Right lobe of liver (tissue), 6 donors: ENCODE measurements at regions of chr9 and their contacts with region 1.

Region 1: GRCh38 chr9:132288361-132288760 is 66.4 kb downstream of the SETX start:
- DNase-seq: no peak
- ATAC-seq: peak in 1 of 4 donors; percentile 58
- H3K4me3 ChIP-seq: no peak overlapping the region
- H3K27ac ChIP-seq: no peak overlapping the region
- H3K4me1 ChIP-seq: no peaks in the 10 kb centered on the region
- H3K27me3 ChIP-seq: no peaks in the 10 kb centered on the region
- CTCF ChIP-seq: no peak
- POLR2A ChIP-seq: no peak

Region 2: DNA sequence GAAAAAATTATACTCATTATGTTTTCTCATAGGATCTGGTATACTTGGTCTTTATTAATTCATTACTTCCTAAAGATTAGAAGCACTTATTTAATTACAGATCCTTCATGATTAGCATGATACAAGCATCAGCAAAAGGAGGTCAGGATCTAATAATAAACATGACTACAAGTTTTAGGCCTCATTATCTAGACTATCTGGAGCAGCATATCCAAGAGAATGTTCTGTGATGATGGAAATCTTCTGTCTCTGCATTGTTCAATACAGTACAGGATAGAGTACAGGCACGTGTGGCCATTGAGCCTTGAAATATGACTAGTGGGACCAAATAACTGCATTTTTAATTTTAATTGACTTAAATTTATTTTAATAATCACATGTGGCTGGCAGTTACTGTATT is 45.2 kb after region 1 on chr9:
- intact Hi-C with region 1: loop called in 1 of 2 experiments (anchors 10 kb)
- DNase-seq: no peak
- ATAC-seq: no peak
- H3K4me3 ChIP-seq: no peak overlapping the region
- H3K27ac ChIP-seq: no peak overlapping the region
- H3K4me1 ChIP-seq: no peaks in the 10 kb centered on the region
- H3K27me3 ChIP-seq: no peaks in the 10 kb centered on the region
- CTCF ChIP-seq: no peak
- POLR2A ChIP-seq: no peak

Region 3: DNA sequence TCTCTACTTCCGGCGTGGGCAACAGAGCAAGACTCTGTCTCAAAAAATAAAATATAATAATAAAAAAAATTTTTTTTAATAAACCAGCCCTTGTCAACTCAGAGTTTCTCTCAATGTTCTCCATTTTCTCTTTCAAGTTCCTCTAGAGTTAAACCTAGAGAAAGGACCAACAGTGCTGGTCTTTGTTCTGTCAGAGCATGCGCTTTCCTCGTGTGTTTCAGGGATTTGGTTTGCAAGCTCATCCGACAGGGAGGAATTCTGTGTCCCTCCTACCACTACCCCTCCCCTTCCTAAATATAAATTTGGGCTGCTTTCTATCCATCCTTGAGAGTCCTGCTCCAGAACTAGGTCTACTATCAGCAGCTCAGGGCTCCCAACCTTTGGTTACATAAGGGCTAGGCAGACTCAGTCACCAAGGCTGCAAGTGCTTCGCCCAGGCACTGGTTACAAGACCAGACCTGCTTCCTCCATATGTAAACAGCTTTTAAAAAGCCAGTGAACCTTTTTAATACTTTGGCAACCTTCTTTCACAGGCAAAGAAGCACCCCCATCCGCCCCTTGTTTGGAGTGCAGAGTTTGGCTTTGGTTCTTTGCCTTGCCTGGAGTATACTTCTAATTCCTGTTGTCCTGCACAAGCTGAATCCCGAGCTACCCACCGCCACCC is 52.9 kb after region 1 on chr9:
- intact Hi-C with region 1: loop called (anchors 10 kb)
- DNase-seq: no peak
- ATAC-seq: no peak
- H3K4me3 ChIP-seq: no peak overlapping the region
- H3K27ac ChIP-seq: no peak overlapping the region
- H3K4me1 ChIP-seq: no peaks in the 10 kb centered on the region
- H3K27me3 ChIP-seq: no peaks in the 10 kb centered on the region
- CTCF ChIP-seq: no peak
- POLR2A ChIP-seq: no peak